ENCODE measurements at regions of chr9 and their contacts with region 1.

Region 1: GRCh38 chr9:135559606-135560005 is 1.9 kb upstream of the PAEP start:
- DNase-seq: no peak

Region 2: DNA sequence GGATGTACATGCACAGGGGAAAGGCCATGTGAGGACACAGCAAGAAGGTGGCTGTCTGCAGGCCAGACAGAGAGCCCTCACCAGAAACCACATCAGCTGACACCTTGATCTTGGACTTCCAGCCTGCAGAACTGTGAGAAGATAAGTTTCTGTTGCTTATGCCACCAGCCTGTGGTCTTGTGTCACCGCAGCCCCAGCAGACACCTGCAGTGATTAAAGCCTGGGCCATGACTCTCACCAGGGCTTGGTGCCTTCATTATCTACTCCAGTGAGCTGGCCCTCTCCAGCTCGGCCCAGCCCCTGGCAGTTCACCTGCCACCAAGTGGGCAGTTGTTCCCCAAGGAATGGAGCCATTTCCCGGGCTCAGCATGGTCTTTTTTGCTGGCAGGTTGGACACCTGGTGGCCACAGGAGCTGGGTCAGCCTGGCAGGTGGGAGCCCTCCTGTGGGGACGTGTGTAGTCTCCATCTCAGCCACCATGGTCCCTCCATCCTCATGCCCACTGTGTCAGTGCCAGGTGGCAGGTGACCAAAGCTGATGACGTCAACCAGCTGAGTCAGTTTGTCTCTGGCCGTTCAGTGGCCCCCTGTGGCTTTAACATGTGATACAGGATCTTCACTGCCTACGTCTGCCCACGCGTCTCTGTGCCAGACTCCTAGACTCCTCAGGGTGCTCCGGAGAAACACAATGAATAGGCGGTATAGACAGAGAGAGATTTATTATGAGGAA is 179.9 kb before region 1 on chr9:
- in situ Hi-C with region 1: loop called (anchors 10 kb)
- DNase-seq: peak; percentile 68

Region 3: DNA sequence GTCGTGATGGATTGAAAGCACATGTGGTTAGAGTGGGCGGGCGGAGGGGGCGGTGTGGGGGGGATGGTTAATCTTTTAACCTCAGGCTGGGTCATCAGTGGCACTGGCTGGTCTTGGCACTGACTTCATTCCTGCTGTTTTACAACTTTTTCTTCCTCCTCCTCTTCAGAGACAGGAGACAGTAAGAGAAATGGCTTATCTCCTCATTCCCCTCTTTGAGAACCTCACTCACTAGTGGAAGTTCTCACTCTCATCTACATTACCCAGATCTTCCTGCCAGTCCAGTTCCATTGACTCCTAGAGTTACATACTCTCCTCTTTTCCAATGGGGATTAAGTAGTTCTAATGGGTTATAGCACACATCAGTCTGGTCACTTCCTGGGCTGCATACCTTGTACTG is 122.3 kb before region 1 on chr9:
- in situ Hi-C with region 1: no loop called
- DNase-seq: no peak

Region 4: DNA sequence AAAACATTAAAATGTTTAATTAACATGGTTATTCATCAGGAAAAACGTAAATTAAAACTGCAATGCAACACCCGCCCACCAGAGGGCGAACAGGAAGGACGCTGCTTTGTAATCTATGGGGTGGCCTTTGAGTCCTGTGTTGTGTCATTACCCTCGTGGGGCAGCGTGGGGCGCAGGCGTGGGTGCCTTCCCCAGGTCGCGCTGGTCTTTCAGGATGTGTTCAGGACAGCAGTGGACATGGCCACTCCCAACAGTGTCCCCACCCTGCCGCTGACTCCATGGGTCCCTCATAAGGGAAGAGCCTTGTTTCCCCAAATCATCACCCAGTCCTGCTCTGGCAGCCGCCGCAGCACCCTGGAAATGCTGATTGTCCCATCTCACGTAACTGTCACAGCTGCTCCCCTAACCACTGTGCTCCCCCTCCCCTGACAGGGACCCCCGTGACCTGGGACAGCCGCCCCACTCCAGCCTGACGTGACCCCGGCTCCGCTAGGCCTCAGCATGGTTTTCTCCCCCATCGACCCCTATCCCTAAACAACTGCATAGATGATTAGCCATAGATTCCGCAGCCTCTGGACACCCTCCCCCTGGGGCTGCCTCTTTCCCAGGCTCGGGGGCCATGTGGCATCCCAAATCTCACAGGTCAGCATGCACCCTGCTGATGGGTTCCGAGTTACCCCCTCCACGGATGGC is 43.3 kb after region 1 on chr9:
- in situ Hi-C with region 1: no loop called
- DNase-seq: peak; percentile 12